Activated CD4-positive, alpha-beta T cell treated with anti-CD3 and anti-CD28 coated beads, Interleukin-2, amount 10 ng/mL, durations not matched to agents 24 days and 14 days (primary cell): ENCODE measurements at regions of chr3 and their contacts with region 1.

Region 1: DNA sequence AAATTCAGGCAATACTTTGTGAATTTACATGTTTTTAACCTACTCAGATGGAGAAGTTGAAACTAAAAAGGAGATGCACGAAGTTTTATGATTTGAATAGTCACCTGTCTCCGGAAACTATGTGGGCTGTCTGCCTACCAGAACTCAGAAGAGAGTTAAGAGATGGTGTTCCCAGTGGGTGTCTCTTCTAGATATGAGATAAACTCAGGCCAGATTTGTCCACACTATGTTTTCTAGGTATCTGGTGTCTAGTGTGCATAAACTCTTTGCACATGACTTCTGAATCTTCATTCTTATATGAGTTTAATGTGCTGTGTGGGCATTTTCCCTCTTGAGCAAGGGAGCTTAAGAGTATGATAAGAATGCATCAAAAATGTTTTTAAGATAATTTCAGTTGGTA is 222.8 kb downstream of the FOXP1 start:
- DNase-seq: no peak
- H3K4me3 Mint-ChIP-seq: peak overlapping the region; percentile 23
- H3K27ac Mint-ChIP-seq: peak overlapping the region; percentile 89
- H3K4me1 Mint-ChIP-seq: peaks cover 25% of the 10 kb centered on the region
- H3K27me3 Mint-ChIP-seq: peaks cover 19% of the 10 kb centered on the region

Region 2: GRCh38 chr3:71380096-71380495 is 19.3 kb after region 1 on chr3:
- intact Hi-C with region 1: loop called (anchors 1 kb)
- DNase-seq: no peak
- H3K4me3 Mint-ChIP-seq: no peak overlapping the region
- H3K27ac Mint-ChIP-seq: no peak overlapping the region
- H3K4me1 Mint-ChIP-seq: peaks cover 22% of the 10 kb centered on the region
- H3K27me3 Mint-ChIP-seq: peaks cover 12% of the 10 kb centered on the region

Region 3: GRCh38 chr3:71389911-71390573 is 29.3 kb after region 1 on chr3:
- intact Hi-C with region 1: loop called (anchors 1 kb)
- DNase-seq: peak; percentile 69
- H3K4me3 Mint-ChIP-seq: peak overlapping the region; percentile 46
- H3K27ac Mint-ChIP-seq: peak overlapping the region; percentile 62
- H3K4me1 Mint-ChIP-seq: peaks cover 34% of the 10 kb centered on the region
- H3K27me3 Mint-ChIP-seq: peaks cover 31% of the 10 kb centered on the region

Region 4: DNA sequence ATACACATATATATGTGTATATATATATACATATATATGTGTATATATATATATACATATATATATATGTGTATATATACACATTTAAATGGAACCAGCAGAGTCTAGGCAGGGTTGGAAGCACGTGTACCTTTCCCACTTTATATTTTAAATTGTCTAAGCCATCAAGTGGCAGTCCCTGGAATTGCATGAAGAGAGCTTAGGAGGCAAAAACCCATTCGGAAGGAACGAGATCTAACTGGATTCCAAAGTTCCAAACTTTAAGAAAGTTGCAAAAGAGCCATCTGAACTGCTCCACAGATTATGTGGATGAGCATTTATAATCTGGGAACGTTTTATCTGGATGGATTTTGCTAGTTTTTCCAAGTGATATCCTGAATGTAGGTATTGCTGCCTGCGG is 36.3 kb after region 1 on chr3:
- intact Hi-C with region 1: loop called (anchors 1 kb)
- DNase-seq: no peak
- H3K4me3 Mint-ChIP-seq: no peak overlapping the region
- H3K27ac Mint-ChIP-seq: no peak overlapping the region
- H3K4me1 Mint-ChIP-seq: peaks cover 22% of the 10 kb centered on the region
- H3K27me3 Mint-ChIP-seq: peaks cover 35% of the 10 kb centered on the region